Endothelial cell of umbilical vein (primary cell): ENCODE measurements at regions of chr4 and their contacts with region 1.

Region 1: DNA sequence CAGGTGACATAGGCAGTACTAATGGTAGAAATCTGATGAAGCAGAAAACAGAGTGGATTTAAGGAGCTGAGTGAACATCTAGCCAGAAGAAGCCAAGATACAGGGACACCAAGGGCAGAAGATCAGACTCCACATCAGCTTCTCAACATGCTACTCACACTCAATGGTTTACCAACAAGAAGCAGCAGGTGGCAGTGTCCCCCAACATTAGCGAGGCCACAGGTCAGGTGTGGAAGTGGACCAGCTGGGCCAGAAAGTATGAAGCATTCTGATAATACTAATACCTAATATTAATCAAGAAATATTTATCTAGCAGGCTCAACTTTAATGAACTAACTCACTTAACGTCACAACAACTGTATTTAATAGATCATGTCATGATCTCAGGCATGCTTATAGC is 73.4 kb upstream of the TTC29 start:
- DNase-seq: peak; percentile 62
- H3K4me3 ChIP-seq: no peak overlapping the region
- H3K27ac ChIP-seq: no peak overlapping the region
- H3K4me1 ChIP-seq: no peaks in the 10 kb centered on the region
- H3K27me3 ChIP-seq: peaks cover 7% of the 10 kb centered on the region in 2 experiments
- CTCF ChIP-seq: peak; percentile 52 to 66
- POLR2A ChIP-seq: no peak

Region 2: DNA sequence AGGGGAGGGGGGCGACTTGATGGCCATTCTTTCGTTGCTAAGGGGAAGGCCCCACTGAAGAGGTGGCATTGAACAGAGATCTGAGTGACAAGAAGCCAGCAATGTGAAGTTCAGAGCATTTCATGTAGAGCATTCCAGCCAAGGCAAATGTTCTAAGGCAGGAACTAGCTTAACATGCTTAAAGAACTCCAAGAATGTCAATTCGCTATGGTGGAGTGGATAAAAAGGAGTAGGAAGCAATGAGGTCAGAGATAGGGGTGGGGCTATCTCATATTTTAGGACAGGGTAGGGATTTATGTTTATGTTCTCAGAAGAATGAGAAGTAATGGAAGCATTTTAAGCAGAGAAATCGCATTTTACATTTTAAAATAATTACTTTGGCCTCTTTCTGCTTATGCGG is 204.3 kb before region 1 on chr4:
- CTCF ChIA-PET with region 1: no interaction called
- POLR2A ChIA-PET with region 1: no interaction called
- dilution Hi-C with region 1: no loop called
- intact Hi-C with region 1: no loop called
- DNase-seq: no peak
- H3K4me3 ChIP-seq: no peak overlapping the region
- H3K27ac ChIP-seq: no peak overlapping the region
- H3K4me1 ChIP-seq: no peaks in the 10 kb centered on the region
- H3K27me3 ChIP-seq: no peaks in the 10 kb centered on the region
- CTCF ChIP-seq: no peak
- POLR2A ChIP-seq: no peak

Region 3: DNA sequence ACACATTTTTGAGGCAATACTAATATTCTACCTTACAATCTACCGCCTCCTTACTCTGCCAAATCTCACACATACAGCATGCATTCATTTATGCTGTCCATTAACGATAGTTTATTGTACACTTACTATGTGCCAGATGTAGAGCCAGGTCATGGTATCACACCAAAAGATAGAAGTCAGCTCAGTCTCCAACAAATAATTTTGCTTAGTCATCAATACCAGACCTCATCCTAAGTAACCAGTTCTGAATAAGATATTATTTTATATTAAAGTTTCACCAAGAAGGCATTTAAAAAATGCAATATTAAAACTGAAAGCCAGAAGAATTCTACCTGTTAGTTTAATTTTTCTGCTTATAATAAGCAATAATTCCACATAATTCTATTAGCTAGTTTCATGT is 12.8 kb before region 1 on chr4:
- CTCF ChIA-PET with region 1: interaction called, 15 read pairs
- POLR2A ChIA-PET with region 1: no interaction called
- dilution Hi-C with region 1: no loop called
- intact Hi-C with region 1: no loop called
- DNase-seq: no peak
- H3K4me3 ChIP-seq: no peak overlapping the region
- H3K27ac ChIP-seq: no peak overlapping the region
- H3K4me1 ChIP-seq: no peaks in the 10 kb centered on the region
- H3K27me3 ChIP-seq: peaks cover 0 to 2% of the 10 kb centered on the region in 2 experiments
- CTCF ChIP-seq: no peak
- POLR2A ChIP-seq: no peak

Region 4: DNA sequence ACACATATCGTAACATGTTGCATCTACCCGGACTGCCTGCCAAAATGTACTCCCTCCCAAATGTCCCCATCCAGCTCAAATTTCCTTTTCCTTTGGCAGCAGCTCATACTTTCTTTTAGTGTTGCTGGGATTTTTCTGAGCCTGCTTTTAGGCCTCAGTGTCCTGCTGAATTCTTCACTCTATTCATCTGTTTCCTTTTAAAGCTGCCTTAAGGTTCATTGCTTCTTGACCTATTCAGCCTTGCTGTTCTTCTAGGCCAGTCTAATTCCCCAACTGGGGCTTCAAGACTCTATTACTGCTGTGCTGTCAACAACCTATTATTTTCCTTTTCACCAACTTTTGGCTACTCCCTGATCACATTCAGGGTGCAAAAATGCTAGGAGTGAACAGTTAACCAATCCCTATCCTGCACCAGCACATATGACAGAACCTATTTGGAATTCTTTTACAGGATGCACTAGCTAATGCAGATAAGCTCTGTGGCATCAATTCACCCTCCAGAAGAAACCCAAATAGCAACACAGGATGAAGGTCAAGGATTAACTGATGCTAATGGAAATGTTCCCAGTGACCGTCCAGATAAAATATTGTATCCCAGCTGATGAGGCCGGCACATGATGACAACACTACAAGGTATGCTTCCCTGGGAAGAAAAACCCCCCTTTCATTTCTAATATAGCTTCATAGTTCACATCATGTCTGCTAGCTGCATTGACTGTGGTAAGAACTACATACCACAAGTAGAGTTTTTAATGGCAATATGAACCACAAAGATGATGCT is 41.3 kb after region 1 on chr4:
- CTCF ChIA-PET with region 1: interaction called, 10 read pairs
- POLR2A ChIA-PET with region 1: no interaction called
- dilution Hi-C with region 1: no loop called
- intact Hi-C with region 1: no loop called
- DNase-seq: no peak
- H3K4me3 ChIP-seq: no peak overlapping the region
- H3K27ac ChIP-seq: no peak overlapping the region
- H3K4me1 ChIP-seq: peaks cover 9% of the 10 kb centered on the region
- H3K27me3 ChIP-seq: peaks cover 0 to 7% of the 10 kb centered on the region in 2 experiments
- CTCF ChIP-seq: no peak
- POLR2A ChIP-seq: no peak

Region 5: DNA sequence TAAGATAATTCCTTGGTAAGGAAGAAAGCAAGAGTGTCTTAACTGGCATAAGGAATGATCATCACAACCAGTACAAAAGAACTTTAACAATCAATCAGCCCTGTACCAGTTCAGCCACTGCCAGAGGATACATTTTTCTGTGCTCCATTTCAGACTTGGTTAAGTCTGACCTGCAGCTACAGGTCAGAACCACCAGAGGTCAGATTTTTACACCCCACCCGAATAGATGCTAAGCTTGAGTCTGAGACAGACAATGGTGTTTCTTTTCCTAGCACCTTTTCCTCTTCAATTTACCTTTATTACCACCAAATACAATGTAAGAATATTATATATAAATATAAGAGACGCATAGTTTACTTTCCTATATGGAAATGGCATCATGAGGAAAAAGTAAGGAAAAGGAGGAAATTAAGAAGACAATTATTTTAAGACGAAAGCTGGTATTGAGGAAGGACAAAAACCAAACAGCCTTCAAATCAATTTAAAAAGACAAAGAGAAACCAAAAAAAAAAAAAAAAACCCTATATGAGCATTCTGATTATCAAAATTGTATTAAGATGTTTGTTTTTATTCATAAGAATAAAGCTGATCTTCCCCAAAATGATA is 141.9 kb after region 1 on chr4:
- CTCF ChIA-PET with region 1: interaction called, 11 read pairs
- POLR2A ChIA-PET with region 1: no interaction called
- dilution Hi-C with region 1: no loop called
- intact Hi-C with region 1: no loop called
- DNase-seq: peak; percentile 53
- H3K4me3 ChIP-seq: no peak overlapping the region
- H3K27ac ChIP-seq: no peak overlapping the region
- H3K4me1 ChIP-seq: peaks cover 4% of the 10 kb centered on the region
- H3K27me3 ChIP-seq: peaks cover 0 to 14% of the 10 kb centered on the region in 2 experiments
- CTCF ChIP-seq: peak; percentile 65 to 71
- POLR2A ChIP-seq: no peak

Region 6: GRCh38 chr4:148103597-148104355 is 1084.7 kb after region 1 on chr4:
- CTCF ChIA-PET with region 1: no interaction called
- POLR2A ChIA-PET with region 1: no interaction called
- dilution Hi-C with region 1: no loop called
- intact Hi-C with region 1: no loop called
- DNase-seq: no peak
- H3K4me3 ChIP-seq: no peak overlapping the region
- H3K27ac ChIP-seq: no peak overlapping the region
- H3K4me1 ChIP-seq: no peaks in the 10 kb centered on the region
- H3K27me3 ChIP-seq: no peaks in the 10 kb centered on the region
- CTCF ChIP-seq: no peak
- POLR2A ChIP-seq: no peak